Activated B cell treated with CpG ODN at 0.5 μM for 24 hours (primary cell): ENCODE measurements at regions of chr3 and their contacts with region 1.

Region 1: GRCh38 chr3:180973543-180973942 is 16.0 kb downstream of the DNAJC19 start:
- DNase-seq: no peak
- ATAC-seq: no peak
- H3K4me3 Mint-ChIP-seq: no peak overlapping the region
- H3K27ac Mint-ChIP-seq: no peak overlapping the region
- H3K4me1 Mint-ChIP-seq: peaks cover 13% of the 10 kb centered on the region
- H3K27me3 Mint-ChIP-seq: no peaks in the 10 kb centered on the region
- CTCF ChIP-seq: no peak

Region 2: GRCh38 chr3:180959691-180960090 is 13.9 kb before region 1 on chr3:
- CTCF ChIA-PET with region 1: no interaction called
- POLR2A ChIA-PET with region 1: interaction called, 4 read pairs
- intact Hi-C with region 1: loop called (anchors 2 kb)
- DNase-seq: no peak
- ATAC-seq: no peak
- H3K4me3 Mint-ChIP-seq: no peak overlapping the region
- H3K27ac Mint-ChIP-seq: no peak overlapping the region
- H3K4me1 Mint-ChIP-seq: peaks cover 7% of the 10 kb centered on the region
- H3K27me3 Mint-ChIP-seq: no peaks in the 10 kb centered on the region
- CTCF ChIP-seq: no peak

Region 3: DNA sequence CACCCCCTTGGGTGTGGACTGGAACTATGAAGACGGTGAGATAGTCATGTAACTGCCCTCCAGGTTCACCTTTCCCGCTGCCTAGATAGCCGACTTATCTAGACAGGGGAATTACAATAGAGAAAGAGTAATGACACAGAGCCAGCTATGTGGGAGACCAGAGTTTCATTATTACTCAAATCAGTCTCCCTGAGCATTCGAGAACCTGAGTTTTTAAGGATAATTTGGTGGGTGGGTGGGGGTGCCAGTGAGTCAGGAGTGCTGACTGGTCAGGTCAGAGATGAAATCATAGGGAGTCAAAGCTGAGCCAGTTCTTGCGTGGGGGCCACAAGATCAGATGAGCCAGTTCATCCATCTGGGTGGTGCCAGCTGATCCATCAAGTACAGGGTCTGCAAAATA is 35.7 kb after region 1 on chr3:
- CTCF ChIA-PET with region 1: no interaction called
- POLR2A ChIA-PET with region 1: no interaction called
- intact Hi-C with region 1: no loop called
- DNase-seq: no peak
- ATAC-seq: no peak
- H3K4me3 Mint-ChIP-seq: no peak overlapping the region
- H3K27ac Mint-ChIP-seq: no peak overlapping the region
- H3K4me1 Mint-ChIP-seq: no peaks in the 10 kb centered on the region
- H3K27me3 Mint-ChIP-seq: peaks cover 7% of the 10 kb centered on the region
- CTCF ChIP-seq: no peak